Transverse colon (tissue), 4 donors: ENCODE measurements at regions of chr4 and their contacts with region 1.

Region 1: GRCh38 chr4:12852338-12853307 is 631.5 kb downstream of the RAB28 start:
- DNase-seq: no peak
- H3K4me3 ChIP-seq: no peak overlapping the region
- H3K27ac ChIP-seq: peak overlapping the region in 1 of 4 donors; percentile 6
- H3K4me1 ChIP-seq: peaks cover 0 to 5% (median 0%) of the 10 kb centered on the region in 4 donors
- H3K27me3 ChIP-seq: no peaks in the 10 kb centered on the region
- CTCF ChIP-seq: peak; percentile 53 to 72 (median 55)
- EP300 ChIP-seq: no peak
- POLR2A ChIP-seq: no peak

Region 2: DNA sequence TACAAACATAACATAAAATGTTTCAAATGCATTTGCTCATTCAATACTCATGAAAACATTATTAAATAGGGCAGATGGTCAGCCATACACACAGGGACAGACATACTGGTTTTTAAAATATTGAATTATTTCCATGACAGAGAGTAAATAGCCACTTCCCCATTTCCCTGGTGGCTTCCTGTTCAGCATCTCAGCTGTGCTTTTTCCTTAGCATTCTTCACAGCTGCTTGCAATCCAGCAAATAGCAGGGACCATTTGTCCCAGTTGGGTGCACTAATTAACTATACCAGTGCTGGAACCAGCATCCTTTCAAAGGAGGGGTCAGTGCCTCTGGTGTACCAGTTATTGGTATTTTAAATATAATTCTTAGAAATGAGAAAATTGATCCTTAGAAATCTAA is 333.2 kb before region 1 on chr4:
- in situ Hi-C with region 1: no loop called
- intact Hi-C with region 1: no loop called
- DNase-seq: no peak
- H3K4me3 ChIP-seq: no peak overlapping the region
- H3K27ac ChIP-seq: no peak overlapping the region
- H3K4me1 ChIP-seq: no peaks in the 10 kb centered on the region
- H3K27me3 ChIP-seq: no peaks in the 10 kb centered on the region
- CTCF ChIP-seq: no peak
- EP300 ChIP-seq: no peak
- POLR2A ChIP-seq: no peak

Region 3: GRCh38 chr4:13298655-13299054 is 446.0 kb after region 1 on chr4:
- in situ Hi-C with region 1: no loop called
- intact Hi-C with region 1: loop called (anchors 10 kb)
- DNase-seq: peak; percentile 46
- H3K4me3 ChIP-seq: no peak overlapping the region
- H3K27ac ChIP-seq: peak overlapping the region; percentile 61 to 86 (median 70)
- H3K4me1 ChIP-seq: peaks cover 0 to 6% (median 0%) of the 10 kb centered on the region in 4 donors
- H3K27me3 ChIP-seq: no peaks in the 10 kb centered on the region
- CTCF ChIP-seq: peak in 3 of 5 experiments; percentile 12 to 23 (median 15)
- EP300 ChIP-seq: peak; percentile 77
- POLR2A ChIP-seq: no peak

Region 4: DNA sequence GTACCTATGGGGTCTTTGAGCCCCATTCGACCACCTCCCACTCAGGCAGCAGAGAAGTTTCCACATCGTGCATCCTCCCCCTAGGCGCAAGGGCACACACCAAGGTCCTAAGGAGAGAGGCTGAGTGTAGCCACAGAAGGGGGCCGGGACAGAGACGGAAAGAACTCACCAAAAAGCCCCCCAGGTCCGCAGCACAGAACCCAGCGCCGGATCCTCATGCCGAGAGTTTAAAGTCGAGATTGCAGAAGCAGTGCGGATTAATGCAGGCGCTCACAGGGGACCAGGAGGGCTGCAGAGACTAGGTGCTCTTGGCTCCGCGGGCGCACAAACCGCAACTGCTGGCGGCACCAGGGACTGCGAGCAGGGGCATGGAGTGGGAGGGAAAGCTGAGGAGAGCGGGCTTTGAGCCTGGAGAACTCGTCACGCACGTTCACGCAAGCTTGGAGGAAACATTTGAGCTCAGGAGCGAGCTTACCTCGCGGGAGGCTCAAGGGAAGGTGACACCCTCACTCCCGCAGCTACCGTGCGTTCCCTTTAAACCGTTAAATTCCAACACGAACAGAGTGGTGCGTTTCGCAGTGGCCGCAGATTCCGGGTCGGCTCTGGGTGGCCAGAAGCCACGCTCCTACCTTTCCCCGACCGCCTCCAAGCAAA is 683.2 kb after region 1 on chr4:
- in situ Hi-C with region 1: loop called in 3 of 4 experiments (anchors 5 to 10 kb)
- intact Hi-C with region 1: no loop called
- DNase-seq: no peak
- H3K4me3 ChIP-seq: peak overlapping the region in 3 of 4 donors; percentile 7 to 17 (median 11)
- H3K27ac ChIP-seq: peak overlapping the region in 3 of 4 donors; percentile 19 to 94 (median 27)
- H3K4me1 ChIP-seq: no peaks in the 10 kb centered on the region
- H3K27me3 ChIP-seq: peaks cover 100% of the 10 kb centered on the region
- CTCF ChIP-seq: no peak
- EP300 ChIP-seq: no peak
- POLR2A ChIP-seq: no peak